ENCODE measurements at regions of chr16 and their contacts with region 1.

Region 1: GRCh38 chr16:35713762-35714650 is 2254.6 kb downstream of the TP53TG3F start:
- DNase-seq: no peak
- H3K4me3 ChIP-seq: no peak overlapping the region
- H3K27ac ChIP-seq: no peak overlapping the region
- H3K4me1 ChIP-seq: no peaks in the 10 kb centered on the region
- H3K27me3 ChIP-seq: no peaks in the 10 kb centered on the region
- CTCF ChIP-seq: no peak
- POLR2A ChIP-seq: no peak

Region 2: DNA sequence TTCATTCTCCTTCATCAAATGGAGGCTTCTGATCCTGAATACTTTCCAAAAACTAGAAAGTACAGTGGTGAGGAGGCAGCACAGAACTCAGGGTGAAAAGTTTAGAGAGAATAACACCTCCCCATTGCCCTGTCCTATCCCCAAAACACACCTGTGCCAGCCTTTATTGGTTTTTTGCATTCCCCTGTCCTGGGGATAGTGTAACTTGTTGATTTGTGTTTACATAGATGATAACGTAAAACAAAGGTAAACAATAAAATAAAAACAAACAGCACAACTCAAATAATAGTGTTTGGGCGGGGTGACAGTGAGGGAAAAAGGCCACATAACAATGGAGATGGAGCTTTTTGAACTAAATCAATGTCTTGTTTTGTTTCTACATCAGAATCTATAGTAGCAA is 336.9 kb before region 1 on chr16:
- intact Hi-C with region 1: loop called (anchors 5 kb)
- DNase-seq: no peak
- H3K4me3 ChIP-seq: no peak overlapping the region
- H3K27ac ChIP-seq: no peak overlapping the region
- H3K4me1 ChIP-seq: no peaks in the 10 kb centered on the region
- H3K27me3 ChIP-seq: no peaks in the 10 kb centered on the region
- CTCF ChIP-seq: no peak
- POLR2A ChIP-seq: no peak

Region 3: DNA sequence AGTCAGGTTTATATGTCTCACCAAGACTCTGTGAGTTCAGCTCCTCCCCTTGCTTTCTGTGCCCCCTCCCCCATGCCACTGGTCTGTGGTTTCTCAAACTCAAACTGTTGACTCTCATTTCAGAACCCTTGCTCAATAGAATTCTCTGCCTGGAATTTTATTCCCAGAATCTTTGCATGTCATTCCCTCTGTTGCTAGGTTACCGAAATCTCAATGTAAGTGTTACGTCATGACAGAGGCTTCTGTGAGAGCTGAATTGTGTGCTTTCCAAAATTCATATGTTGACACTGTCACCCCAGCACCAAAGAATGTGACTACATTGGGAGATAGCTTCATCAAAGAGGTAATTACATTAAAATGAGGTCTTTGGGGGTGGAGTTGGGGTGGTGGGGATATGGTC is 315.8 kb before region 1 on chr16:
- intact Hi-C with region 1: no loop called
- DNase-seq: no peak
- H3K4me3 ChIP-seq: no peak overlapping the region
- H3K27ac ChIP-seq: no peak overlapping the region
- H3K4me1 ChIP-seq: no peaks in the 10 kb centered on the region
- H3K27me3 ChIP-seq: no peaks in the 10 kb centered on the region
- CTCF ChIP-seq: no peak
- POLR2A ChIP-seq: no peak

Region 4: DNA sequence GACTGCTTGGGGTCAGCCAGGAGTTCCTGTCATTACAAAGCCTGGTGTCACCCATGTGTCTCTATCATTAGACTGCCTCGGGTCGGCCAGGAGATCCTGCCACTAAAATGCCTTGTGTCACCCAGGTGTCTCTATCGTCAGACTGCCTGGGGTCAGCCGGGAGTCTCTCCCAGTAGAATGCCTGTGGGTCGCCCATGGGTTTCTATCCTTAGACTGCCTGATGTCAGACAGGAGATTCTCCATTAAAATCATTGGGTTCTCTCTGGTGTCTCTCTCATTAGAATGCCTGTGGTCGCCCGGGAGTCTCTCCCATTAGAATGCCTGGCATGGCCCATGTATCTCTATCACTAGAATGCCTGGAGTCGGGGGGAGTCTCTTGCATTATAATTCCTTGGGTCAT is 23.6 kb before region 1 on chr16:
- intact Hi-C with region 1: no loop called
- DNase-seq: no peak
- H3K4me3 ChIP-seq: no peak overlapping the region
- H3K27ac ChIP-seq: no peak overlapping the region
- H3K4me1 ChIP-seq: no peaks in the 10 kb centered on the region
- H3K27me3 ChIP-seq: no peaks in the 10 kb centered on the region
- CTCF ChIP-seq: no peak
- POLR2A ChIP-seq: no peak